Thyroid gland (tissue), 4 donors: ENCODE measurements at regions of chr18 and their contacts with region 1.

Region 1: DNA sequence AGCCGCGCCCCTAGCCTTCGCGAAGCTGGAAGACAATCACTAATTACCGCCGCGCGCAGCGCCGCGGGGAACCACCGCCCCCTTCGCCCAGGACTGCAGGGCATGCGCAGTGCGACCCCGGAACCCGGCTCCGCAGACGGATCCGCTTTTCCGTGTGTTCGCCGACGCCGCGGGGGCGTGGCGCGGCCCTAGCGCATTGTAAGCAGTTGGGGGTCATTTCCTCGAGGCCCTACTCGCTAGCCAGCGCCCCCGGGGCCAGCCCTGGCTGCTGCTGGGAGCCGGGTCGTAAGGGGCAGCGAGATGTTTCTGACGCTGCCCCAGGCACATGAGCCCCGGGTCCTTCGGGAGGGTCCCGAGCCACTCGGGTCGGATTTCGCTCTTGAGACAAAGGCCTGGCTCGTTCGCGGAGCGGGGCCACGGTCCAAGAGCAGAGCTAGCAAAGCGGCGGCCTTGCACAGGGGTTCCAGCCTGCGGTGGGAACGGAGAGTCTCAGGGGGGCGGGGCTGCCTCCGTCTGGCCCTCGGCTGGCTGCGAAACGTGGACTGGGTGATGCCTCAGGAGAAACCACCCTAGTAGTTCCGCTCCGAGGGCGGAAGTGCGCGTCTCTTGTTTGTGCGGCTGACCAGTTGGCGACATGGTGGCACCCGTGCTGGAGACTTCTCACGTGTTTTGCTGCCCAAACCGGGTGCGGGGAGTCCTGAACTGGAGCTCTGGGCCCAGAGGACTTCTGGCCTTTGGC is at the starts of genes ELP2 and SLC39A6:
- DNase-seq: peak; percentile 98
- H3K4me3 ChIP-seq: peak within 1 kb of the TSS; percentile 91 to 99 (median 94)
- H3K27ac ChIP-seq: peak within 1 kb of the TSS; percentile 98 to 100 (median 99)
- H3K4me1 ChIP-seq: peaks cover 12 to 27% of the 10 kb centered on the region in 2 donors
- H3K27me3 ChIP-seq: no peaks in the 10 kb centered on the region
- CTCF ChIP-seq: no peak
- POLR2A ChIP-seq: peak in 1 of 2 donors; percentile 76
- total RNA-seq, gene ELP2: 50.5 to 93.2 (median 61.4) TPM
- total RNA-seq, gene SLC39A6: 42.6 to 52.8 (median 48.1) TPM

Region 2: DNA sequence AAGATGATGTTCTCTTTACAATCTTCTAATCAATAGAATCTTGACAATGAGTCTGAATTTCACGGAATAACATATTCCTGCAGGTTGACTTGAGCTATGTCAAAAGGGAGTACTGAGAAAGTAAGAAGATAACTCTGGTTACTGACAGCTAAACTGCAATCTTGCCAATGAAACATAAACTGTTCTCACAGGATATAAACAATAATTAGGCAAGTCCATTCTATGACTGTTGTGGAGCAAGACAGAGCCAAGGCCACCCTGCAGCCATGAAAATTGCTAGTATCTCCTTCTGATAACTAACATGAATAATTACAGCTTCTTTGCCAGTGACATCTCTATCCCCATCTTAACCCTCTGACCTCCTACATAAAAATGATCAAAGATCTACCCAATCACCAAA is 55.8 kb before region 1 on chr18:
- intact Hi-C with region 1: loop called (anchors 5 kb)
- DNase-seq: no peak
- H3K4me3 ChIP-seq: no peak overlapping the region
- H3K27ac ChIP-seq: no peak overlapping the region
- H3K4me1 ChIP-seq: peaks cover 7 to 11% of the 10 kb centered on the region in 2 donors
- H3K27me3 ChIP-seq: no peaks in the 10 kb centered on the region
- CTCF ChIP-seq: no peak
- POLR2A ChIP-seq: no peak